ENCODE measurements at regions of chr5 and their contacts with region 1.

Region 1: GRCh38 chr5:141960449-141961202 is 2.6 kb upstream of the PCDH12 start:
- DNase-seq: peak; percentile 72 to 79
- ATAC-seq: peak; percentile 83 to 91
- H3K4me3 ChIP-seq: no peak overlapping the region
- H3K27ac ChIP-seq: peak overlapping the region in 1 of 4 donors; percentile 45
- H3K4me1 ChIP-seq: peaks cover 0 to 3% of the 10 kb centered on the region in 2 donors
- H3K27me3 ChIP-seq: no peaks in the 10 kb centered on the region
- CTCF ChIP-seq: peak; percentile 78 to 87 (median 84)
- POLR2A ChIP-seq: no peak

Region 2: GRCh38 chr5:141686648-141687416 is 273.8 kb before region 1 on chr5:
- in situ Hi-C with region 1: loop called (anchors 5 kb)
- intact Hi-C with region 1: loop called (anchors 1 kb)
- DNase-seq: no peak
- ATAC-seq: no peak
- H3K4me3 ChIP-seq: no peak overlapping the region
- H3K27ac ChIP-seq: no peak overlapping the region
- H3K4me1 ChIP-seq: peaks cover 0 to 7% of the 10 kb centered on the region in 2 donors
- H3K27me3 ChIP-seq: peaks cover 0 to 2% (median under 1%) of the 10 kb centered on the region in 3 donors
- CTCF ChIP-seq: no peak
- POLR2A ChIP-seq: no peak

Region 3: DNA sequence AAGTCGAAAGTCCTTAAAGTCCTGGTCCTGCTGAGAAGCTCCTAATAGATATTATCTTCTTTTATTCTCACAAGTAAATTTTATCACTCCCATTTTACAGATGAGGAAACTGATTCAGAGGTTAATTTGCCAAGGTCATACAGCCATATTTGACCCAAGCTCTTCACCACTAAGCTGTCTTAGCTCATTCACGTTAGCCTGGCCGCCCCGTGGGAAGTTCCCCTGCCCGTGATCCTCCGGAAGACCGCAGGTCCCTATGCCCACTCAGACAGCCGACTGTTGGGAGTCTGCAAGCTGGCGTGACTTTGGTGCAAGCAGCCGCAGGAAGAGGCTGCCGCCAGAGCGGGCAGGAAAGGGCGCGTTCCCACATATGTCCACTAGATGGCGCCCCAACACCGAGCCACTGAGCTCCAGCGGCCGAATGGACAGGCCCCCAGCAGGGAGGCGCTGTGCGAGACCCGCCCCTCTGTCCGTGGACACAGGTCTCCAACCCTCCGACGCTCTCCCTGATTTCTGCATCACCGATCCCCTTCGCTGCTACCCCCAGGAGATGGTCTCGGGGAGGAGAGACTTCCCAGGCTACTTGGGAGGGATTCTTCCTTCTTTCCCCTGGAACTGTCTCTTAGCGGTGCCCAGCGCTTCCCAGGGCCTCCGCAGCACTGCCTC is 268.6 kb before region 1 on chr5:
- in situ Hi-C with region 1: loop called (anchors 5 kb)
- intact Hi-C with region 1: loop called (anchors 1 kb)
- DNase-seq: peak; percentile 48 to 69
- ATAC-seq: peak; percentile 88 to 96
- H3K4me3 ChIP-seq: peak overlapping the region in 3 of 4 donors; percentile 30 to 50 (median 43)
- H3K27ac ChIP-seq: no peak overlapping the region
- H3K4me1 ChIP-seq: peaks cover 0 to 4% of the 10 kb centered on the region in 2 donors
- H3K27me3 ChIP-seq: no peaks in the 10 kb centered on the region
- CTCF ChIP-seq: peak; percentile 94 to 99 (median 98)
- POLR2A ChIP-seq: no peak

Region 4: DNA sequence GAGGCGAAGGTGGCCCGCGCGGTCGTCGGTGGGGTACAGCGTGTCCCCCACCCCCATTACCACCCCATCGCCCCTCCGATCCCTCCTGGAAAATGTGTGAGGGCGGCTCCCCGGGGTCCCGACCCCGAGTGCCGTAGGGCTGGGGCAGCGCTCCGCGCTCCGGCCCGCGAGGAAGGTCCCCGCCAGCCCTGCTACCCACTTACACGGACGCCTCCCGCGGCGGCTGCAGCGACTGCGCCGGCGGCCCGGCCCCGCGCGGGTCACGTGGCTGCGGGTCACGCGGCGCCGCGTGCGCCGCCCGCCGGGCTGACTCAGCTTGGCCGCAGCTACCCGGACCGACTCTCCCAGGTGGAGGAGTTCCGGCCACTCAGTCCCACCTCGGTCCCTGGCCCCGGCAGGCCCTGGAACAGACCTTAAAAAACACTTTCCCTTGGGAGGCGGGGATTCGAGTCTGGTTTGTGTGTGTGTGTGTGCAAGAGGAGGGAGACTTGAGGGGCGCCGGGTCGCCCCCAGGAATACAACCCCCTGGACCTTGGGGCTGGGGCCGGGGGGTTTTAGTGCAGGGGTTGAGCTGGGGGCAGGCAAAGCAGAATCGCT is 52.3 kb after region 1 on chr5 and contains the start of gene GNPDA1:
- in situ Hi-C with region 1: no loop called
- intact Hi-C with region 1: no loop called
- DNase-seq: peak; percentile 76 to 85
- ATAC-seq: peak; percentile 84 to 89
- H3K4me3 ChIP-seq: peak within 1 kb of the TSS; percentile 74 to 91 (median 83)
- H3K27ac ChIP-seq: peak within 1 kb of the TSS; percentile 91 to 99 (median 98)
- H3K4me1 ChIP-seq: peaks cover 15 to 19% of the 10 kb centered on the region in 2 donors
- H3K27me3 ChIP-seq: no peaks in the 10 kb centered on the region
- CTCF ChIP-seq: peak in 4 of 5 experiments; percentile 19 to 52 (median 38)
- POLR2A ChIP-seq: peak; percentile 86 to 93
- total RNA-seq, gene GNPDA1: 22.3 to 50.0 (median 47.3) TPM

Region 5: DNA sequence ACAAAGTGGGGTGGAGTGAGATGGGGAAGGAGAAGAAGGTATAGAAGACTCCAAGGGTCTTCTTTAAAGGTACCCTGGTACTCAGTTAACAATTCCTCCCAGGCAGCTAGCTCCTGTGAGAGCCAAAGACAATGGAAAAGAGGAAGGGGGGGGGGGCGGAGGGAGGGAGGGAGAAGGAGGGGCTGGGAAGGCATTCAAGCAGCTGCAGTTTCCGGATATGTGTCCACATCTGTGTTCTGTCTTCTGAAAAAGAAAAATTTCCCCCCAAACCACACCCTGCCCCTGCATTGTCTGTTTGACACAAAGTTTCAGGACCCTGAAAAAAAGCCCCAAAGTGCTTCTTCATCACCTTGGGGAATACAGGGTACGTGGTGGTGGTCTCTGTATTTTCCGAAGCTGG is 353.1 kb after region 1 on chr5:
- in situ Hi-C with region 1: no loop called
- intact Hi-C with region 1: no loop called
- DNase-seq: no peak
- ATAC-seq: no peak
- H3K4me3 ChIP-seq: no peak overlapping the region
- H3K27ac ChIP-seq: peak overlapping the region in 2 of 4 donors; percentile 28 to 40
- H3K4me1 ChIP-seq: peaks cover 24 to 40% of the 10 kb centered on the region in 2 donors
- H3K27me3 ChIP-seq: no peaks in the 10 kb centered on the region
- CTCF ChIP-seq: no peak
- POLR2A ChIP-seq: no peak